ENCODE measurements at regions of chr6 and their contacts with region 1.

Region 1: GRCh38 chr6:4055420-4056041 is 23.4 kb downstream of the FAM217A start:
- DNase-seq: peak; percentile 50
- H3K4me3 ChIP-seq: no peak overlapping the region
- CTCF ChIP-seq: peak; percentile 49

Region 2: DNA sequence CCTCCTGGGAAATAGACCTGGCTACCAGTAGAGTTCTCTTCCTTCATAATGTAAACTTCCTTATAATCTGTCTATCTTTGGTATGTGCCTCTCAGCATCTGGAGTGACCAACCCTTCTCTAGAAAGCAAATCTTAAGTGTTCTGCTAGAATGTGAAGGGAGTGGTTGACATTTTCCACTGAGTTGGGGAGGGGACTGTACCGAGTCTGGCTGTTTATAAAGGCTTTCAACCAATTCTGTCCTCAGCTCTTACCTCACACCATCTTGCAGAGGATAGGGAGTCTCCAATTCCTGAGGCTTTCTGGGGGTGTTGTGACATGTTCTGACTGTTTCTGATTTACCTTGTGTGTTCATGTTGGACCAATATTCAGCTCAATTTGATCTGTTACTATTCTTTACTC is 16.2 kb before region 1 on chr6:
- CTCF ChIA-PET with region 1: interaction called, 17 read pairs
- POLR2A ChIA-PET with region 1: no interaction called
- DNase-seq: no peak
- H3K4me3 ChIP-seq: no peak overlapping the region
- CTCF ChIP-seq: no peak

Region 3: DNA sequence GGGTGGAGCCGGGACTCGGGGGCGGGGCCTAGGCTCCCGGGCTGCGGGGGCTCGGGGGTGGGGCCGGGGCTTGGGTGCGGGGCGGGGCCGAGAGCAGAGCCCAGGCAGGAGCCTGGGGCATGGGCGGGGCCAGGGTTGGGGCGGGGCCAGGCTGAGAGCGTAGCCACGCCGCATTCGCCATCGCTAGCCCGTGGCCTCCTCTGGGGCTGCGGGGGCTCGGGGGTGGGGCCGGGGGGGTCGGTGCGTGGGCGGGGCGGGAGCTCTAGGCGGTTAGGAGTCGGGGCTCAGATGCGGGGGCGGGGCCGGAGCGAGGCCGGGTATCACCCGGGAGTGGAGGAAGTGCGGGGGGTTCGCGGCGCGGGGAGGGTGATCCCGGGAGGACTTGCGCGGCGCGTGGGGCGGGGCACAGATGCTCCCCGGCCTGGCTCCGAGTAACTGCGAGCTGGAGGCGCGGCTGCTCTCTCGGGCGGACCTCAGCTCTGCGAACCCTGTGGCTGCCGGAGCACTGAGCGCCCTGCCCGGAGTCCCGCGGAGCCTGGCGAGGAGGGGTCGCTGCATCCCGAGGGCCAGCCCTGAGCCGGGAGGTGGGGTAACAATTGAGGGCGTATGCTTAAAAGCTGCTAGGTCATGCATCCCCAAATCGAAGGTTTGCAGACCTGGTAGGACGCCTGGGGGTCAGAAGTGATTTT is 80.3 kb after region 1 on chr6:
- CTCF ChIA-PET with region 1: interaction called, 23 read pairs
- POLR2A ChIA-PET with region 1: interaction called, 4 read pairs
- DNase-seq: peak; percentile 60
- H3K4me3 ChIP-seq: peak overlapping the region; percentile 73
- CTCF ChIP-seq: no peak